Activated naive CD4-positive, alpha-beta T cell treated with anti-CD3 and anti-CD28 coated beads for 36 hours (primary cell): ENCODE measurements at regions of chr3 and their contacts with region 1.

Region 1: GRCh38 chr3:71006810-71007785 is 576.4 kb downstream of the FOXP1 start:
- DNase-seq: no peak
- H3K4me3 Mint-ChIP-seq: no peak overlapping the region
- H3K27ac Mint-ChIP-seq: peak overlapping the region; percentile 71
- H3K4me1 Mint-ChIP-seq: peaks cover 77% of the 10 kb centered on the region
- H3K27me3 Mint-ChIP-seq: no peaks in the 10 kb centered on the region

Region 2: GRCh38 chr3:70771426-70772147 is 235.5 kb before region 1 on chr3:
- CTCF ChIA-PET with region 1: no interaction called
- intact Hi-C with region 1: loop called (anchors 1 kb)
- DNase-seq: no peak
- H3K4me3 Mint-ChIP-seq: no peak overlapping the region
- H3K27ac Mint-ChIP-seq: no peak overlapping the region
- H3K4me1 Mint-ChIP-seq: peaks cover 14% of the 10 kb centered on the region
- H3K27me3 Mint-ChIP-seq: peaks cover 25% of the 10 kb centered on the region

Region 3: DNA sequence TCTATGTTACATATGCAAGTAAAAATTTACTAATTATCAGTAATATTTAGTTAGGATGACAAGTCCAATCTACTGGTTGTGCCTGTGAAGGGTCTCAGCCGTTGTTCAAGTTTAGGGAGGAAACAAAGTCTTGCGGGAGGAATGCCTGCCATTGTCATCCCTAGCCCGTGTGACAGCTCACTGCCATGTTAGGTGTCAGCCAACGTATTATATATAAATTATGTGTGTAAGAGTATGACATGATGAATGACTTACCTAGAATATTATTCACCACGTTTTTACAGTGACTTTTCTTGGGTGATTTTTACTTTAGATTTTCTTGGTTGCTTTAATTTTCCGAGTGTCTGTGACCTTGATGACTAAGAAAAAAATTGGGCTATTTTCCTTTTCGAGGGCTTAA is 80.3 kb before region 1 on chr3:
- CTCF ChIA-PET with region 1: no interaction called
- intact Hi-C with region 1: no loop called
- DNase-seq: no peak
- H3K4me3 Mint-ChIP-seq: no peak overlapping the region
- H3K27ac Mint-ChIP-seq: no peak overlapping the region
- H3K4me1 Mint-ChIP-seq: no peaks in the 10 kb centered on the region
- H3K27me3 Mint-ChIP-seq: no peaks in the 10 kb centered on the region

Region 4: DNA sequence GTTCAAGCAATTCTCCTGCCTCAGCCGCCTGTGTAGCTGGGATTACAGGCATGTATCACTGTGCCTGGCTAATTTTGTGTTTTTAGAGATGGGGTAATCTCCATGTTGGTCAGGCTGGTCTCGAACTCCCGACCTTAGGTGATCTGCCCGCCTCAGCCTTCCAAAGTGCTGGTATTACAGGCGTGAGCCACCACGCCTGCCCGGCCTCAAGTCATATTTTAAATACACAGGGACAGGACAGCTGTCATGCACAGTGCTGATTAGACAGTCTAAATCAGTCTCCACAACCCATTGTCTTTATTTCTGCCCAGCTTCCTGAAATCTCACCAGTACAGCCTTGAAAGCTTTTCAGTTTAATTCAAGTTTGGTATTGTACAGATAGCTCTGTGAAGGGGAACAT is 11.0 kb before region 1 on chr3:
- CTCF ChIA-PET with region 1: interaction called, 14 read pairs
- intact Hi-C with region 1: no loop called
- DNase-seq: no peak
- H3K4me3 Mint-ChIP-seq: no peak overlapping the region
- H3K27ac Mint-ChIP-seq: peak overlapping the region; percentile 20
- H3K4me1 Mint-ChIP-seq: peaks cover 55% of the 10 kb centered on the region
- H3K27me3 Mint-ChIP-seq: no peaks in the 10 kb centered on the region

Region 5: GRCh38 chr3:71069797-71070196 is 62.7 kb after region 1 on chr3:
- CTCF ChIA-PET with region 1: interaction called, 7 read pairs
- intact Hi-C with region 1: loop called (anchors 1 kb)
- DNase-seq: peak; percentile 92
- H3K4me3 Mint-ChIP-seq: no peak overlapping the region
- H3K27ac Mint-ChIP-seq: peak overlapping the region; percentile 57
- H3K4me1 Mint-ChIP-seq: peaks cover 78% of the 10 kb centered on the region
- H3K27me3 Mint-ChIP-seq: no peaks in the 10 kb centered on the region

Region 6: GRCh38 chr3:71360764-71361163 is 353.7 kb after region 1 on chr3:
- CTCF ChIA-PET with region 1: no interaction called
- intact Hi-C with region 1: loop called (anchors 1 kb)
- DNase-seq: peak; percentile 43
- H3K4me3 Mint-ChIP-seq: peak overlapping the region; percentile 48
- H3K27ac Mint-ChIP-seq: peak overlapping the region; percentile 70
- H3K4me1 Mint-ChIP-seq: peaks cover 82% of the 10 kb centered on the region
- H3K27me3 Mint-ChIP-seq: no peaks in the 10 kb centered on the region

Region 7: GRCh38 chr3:71512000-71512399 is 504.9 kb after region 1 on chr3:
- CTCF ChIA-PET with region 1: interaction called, 3 read pairs
- intact Hi-C with region 1: loop called (anchors 5 kb)
- DNase-seq: peak; percentile 59
- H3K4me3 Mint-ChIP-seq: no peak overlapping the region
- H3K27ac Mint-ChIP-seq: peak overlapping the region; percentile 6
- H3K4me1 Mint-ChIP-seq: peaks cover 12% of the 10 kb centered on the region
- H3K27me3 Mint-ChIP-seq: no peaks in the 10 kb centered on the region